ENCODE measurements at regions of chr4 and their contacts with region 1.

Region 1: DNA sequence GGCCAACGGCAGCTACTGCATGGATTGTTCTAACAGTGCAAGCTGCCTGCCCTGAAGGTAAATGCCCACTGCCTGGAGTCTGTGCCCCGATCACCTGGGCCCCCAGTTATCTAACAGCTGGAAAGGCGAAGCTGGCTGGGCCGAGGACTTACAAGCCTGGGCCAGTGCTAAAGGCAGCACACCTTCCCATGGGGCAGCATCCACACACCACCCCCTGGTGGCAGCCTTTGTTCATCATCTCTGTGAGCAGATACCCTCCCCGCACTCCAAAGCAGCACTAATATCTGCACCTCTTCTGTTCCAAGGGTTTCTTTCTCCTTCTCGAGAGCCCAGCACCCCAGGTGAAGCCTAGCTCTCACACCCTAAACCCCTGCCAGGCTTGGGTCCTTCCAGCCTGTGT is 7.6 kb downstream of the SLC2A9 start:
- DNase-seq: peak; percentile 67
- H3K4me3 Mint-ChIP-seq: no peak overlapping the region
- H3K27ac Mint-ChIP-seq: no peak overlapping the region
- H3K4me1 Mint-ChIP-seq: peaks cover 2% of the 10 kb centered on the region
- H3K27me3 Mint-ChIP-seq: no peaks in the 10 kb centered on the region

Region 2: GRCh38 chr4:9691238-9692065 is 322.3 kb before region 1 on chr4:
- CTCF ChIA-PET with region 1: interaction called, 19 read pairs
- POLR2A ChIA-PET with region 1: no interaction called
- intact Hi-C with region 1: no loop called
- DNase-seq: peak; percentile 96
- H3K4me3 Mint-ChIP-seq: peak overlapping the region; percentile 80
- H3K27ac Mint-ChIP-seq: peak overlapping the region; percentile 80
- H3K4me1 Mint-ChIP-seq: peaks cover 21% of the 10 kb centered on the region
- H3K27me3 Mint-ChIP-seq: no peaks in the 10 kb centered on the region

Region 3: GRCh38 chr4:9704551-9705332 is 309.0 kb before region 1 on chr4:
- CTCF ChIA-PET with region 1: interaction called, 57 read pairs
- POLR2A ChIA-PET with region 1: no interaction called
- intact Hi-C with region 1: loop called (anchors 1 kb)
- DNase-seq: peak; percentile 27
- H3K4me3 Mint-ChIP-seq: no peak overlapping the region
- H3K27ac Mint-ChIP-seq: no peak overlapping the region
- H3K4me1 Mint-ChIP-seq: peaks cover 11% of the 10 kb centered on the region
- H3K27me3 Mint-ChIP-seq: no peaks in the 10 kb centered on the region